IMR-90 (cell line): ENCODE measurements at regions of chr19 and their contacts with region 1.

Region 1: DNA sequence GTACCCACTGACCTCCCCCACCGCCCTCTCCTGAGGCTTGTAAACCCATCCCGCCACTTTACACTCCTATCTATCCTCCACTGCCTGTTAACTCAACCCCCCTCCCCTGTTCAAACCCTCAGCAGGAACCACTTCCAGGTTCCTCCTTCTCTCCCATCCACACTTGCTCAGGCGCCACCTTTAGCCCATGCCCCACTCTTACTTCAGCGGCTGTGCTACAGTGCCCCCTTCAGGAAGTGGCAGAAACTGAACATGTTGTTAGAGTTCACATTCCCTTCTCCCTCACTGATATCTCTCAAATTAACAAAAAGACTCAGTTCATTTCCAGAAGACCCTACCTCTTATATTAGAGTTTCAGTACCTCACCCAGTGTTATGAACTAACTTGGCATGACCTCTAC is 49.4 kb downstream of the ZNF91 start:
- DNase-seq: no peak
- ATAC-seq: no peak
- H3K4me3 ChIP-seq: no peak overlapping the region
- H3K27ac ChIP-seq: no peak overlapping the region
- H3K4me1 ChIP-seq: no peaks in the 10 kb centered on the region
- H3K27me3 ChIP-seq: no peaks in the 10 kb centered on the region
- CTCF ChIP-seq: no peak
- POLR2A ChIP-seq: no peak
- RAD21 ChIP-seq: no peak

Region 2: GRCh38 chr19:23183251-23183650 is 162.6 kb before region 1 on chr19:
- CTCF ChIA-PET with region 1: no interaction called
- POLR2A ChIA-PET with region 1: no interaction called
- dilution Hi-C with region 1: no loop called
- in situ Hi-C with region 1: no loop called
- intact Hi-C with region 1: no loop called
- DNase-seq: no peak
- ATAC-seq: no peak
- H3K4me3 ChIP-seq: no peak overlapping the region
- H3K27ac ChIP-seq: no peak overlapping the region
- H3K4me1 ChIP-seq: no peaks in the 10 kb centered on the region
- H3K27me3 ChIP-seq: no peaks in the 10 kb centered on the region
- CTCF ChIP-seq: no peak
- POLR2A ChIP-seq: no peak
- RAD21 ChIP-seq: no peak

Region 3: DNA sequence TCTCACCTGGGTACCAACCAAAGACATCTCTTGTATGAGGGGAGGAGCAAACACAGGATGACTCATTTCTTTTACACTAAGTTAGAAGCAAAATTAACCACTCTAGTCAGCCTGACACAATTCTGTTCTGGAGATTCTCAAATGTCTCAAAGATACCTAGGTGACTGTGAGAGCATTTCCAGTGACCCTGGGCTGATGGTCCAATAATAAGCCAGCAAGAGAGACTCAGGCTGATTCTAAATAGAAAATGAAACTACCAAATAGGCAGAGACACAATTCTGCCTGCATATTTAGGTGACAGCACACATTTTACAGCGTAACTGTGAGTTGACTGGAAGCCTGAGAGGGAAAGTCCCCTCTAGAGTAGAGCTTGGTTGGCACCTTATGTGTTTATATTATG is 33.1 kb after region 1 on chr19:
- CTCF ChIA-PET with region 1: no interaction called
- POLR2A ChIA-PET with region 1: interaction called, 11 read pairs
- dilution Hi-C with region 1: no loop called
- in situ Hi-C with region 1: no loop called
- intact Hi-C with region 1: no loop called
- DNase-seq: no peak
- ATAC-seq: no peak
- H3K4me3 ChIP-seq: no peak overlapping the region
- H3K27ac ChIP-seq: no peak overlapping the region
- H3K4me1 ChIP-seq: no peaks in the 10 kb centered on the region
- H3K27me3 ChIP-seq: no peaks in the 10 kb centered on the region
- CTCF ChIP-seq: no peak
- POLR2A ChIP-seq: no peak
- RAD21 ChIP-seq: no peak

Region 4: DNA sequence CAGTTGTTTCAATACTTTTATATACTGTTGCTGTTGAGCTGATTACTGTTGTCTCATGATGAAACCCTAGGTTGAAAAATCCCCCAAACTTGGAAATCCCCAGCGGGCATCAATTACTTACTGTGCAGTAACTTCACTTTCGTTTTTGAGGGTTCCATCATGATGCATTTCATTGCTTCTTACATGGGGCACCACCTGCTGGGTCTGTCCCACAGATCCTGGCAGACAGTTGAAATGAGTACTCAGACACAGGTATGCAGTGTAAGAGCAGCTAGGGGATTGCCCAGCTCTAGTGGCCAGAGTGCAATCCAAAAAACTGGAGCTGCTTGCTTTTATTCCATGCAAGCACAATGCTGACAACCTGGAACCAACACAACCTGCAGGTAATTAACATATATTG is 182.0 kb after region 1 on chr19:
- CTCF ChIA-PET with region 1: no interaction called
- POLR2A ChIA-PET with region 1: no interaction called
- dilution Hi-C with region 1: no loop called
- in situ Hi-C with region 1: no loop called
- intact Hi-C with region 1: no loop called
- DNase-seq: no peak
- ATAC-seq: no peak
- H3K4me3 ChIP-seq: no peak overlapping the region
- H3K27ac ChIP-seq: no peak overlapping the region
- H3K4me1 ChIP-seq: no peaks in the 10 kb centered on the region
- H3K27me3 ChIP-seq: no peaks in the 10 kb centered on the region
- CTCF ChIP-seq: no peak
- POLR2A ChIP-seq: no peak
- RAD21 ChIP-seq: no peak